ENCODE measurements at regions of chr5 and their contacts with region 1.

Region 1: DNA sequence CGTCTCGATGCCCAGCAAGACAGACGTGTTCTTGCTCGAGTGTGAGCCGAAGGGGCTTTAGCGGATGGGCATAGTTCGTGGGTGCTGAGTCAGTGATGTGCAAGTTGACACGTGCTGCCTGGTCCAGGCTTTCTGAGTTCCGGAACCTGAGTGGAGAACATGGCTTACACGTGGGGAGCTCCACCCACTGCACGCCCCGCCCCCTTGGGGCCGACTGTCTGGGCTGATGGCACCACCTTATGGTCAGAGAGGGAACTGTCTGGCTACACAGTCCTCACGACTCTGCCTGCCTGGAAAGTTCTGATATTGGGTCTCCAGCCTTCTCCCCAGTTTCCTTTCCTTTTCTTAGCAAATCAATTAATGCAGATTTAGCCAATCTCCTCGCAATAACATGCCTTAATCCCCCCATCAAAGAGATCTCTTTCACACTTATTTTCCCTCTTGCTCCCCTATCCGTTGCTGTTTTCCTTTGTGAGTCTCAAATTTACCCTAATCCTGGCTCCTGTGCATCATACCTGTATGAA is 3.8 kb upstream of the STC2 start:
- DNase-seq: peak; percentile 95

Region 2: GRCh38 chr5:172347496-172348052 is 984.4 kb before region 1 on chr5:
- intact Hi-C with region 1: no loop called
- DNase-seq: peak; percentile 44

Region 3: DNA sequence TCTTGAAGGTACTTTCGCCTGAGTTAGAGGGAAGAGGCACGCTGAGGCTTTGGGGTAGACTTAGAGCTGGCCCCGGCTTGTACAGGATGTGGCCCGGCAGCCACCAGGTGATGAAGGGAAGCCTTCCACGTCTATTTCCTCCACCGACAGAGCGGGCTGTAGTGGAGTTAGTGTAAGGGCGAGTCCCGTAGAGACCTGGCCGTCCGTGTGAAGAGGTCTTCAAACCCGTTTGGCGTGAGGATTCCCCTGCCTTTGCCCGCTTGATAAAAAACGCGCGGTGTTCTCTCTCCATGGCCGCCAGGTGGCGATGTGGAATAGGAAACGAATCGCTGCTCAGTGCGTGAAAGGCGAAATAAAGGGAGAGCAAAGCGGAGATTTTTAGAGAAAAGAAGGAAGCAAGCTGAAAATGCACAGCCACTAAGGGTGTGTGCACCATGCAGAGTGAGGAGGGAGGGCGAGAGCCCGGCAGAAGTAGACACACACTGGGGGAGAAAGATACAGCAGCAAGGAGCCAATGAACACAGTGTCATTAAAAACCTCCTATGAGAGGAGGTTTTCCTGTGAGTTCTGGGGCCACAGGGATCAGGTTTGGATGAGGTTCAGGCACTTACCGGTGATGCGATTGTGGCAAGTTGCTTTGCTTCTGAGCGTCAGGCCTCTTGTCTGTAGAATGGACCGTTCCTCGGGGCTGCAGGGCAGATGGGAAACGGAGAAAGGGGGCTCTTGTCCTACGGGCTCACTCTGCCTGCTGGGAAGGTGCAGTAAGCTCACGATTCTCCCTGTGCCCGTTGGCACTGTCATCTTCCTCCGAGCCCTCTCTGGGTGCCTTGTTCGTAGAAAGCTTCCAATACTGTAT is 38.0 kb before region 1 on chr5:
- intact Hi-C with region 1: loop called (anchors 2 kb)
- DNase-seq: peak; percentile 90

Region 4: GRCh38 chr5:173315495-173316350 is 16.3 kb before region 1 on chr5:
- intact Hi-C with region 1: no loop called
- DNase-seq: peak; percentile 80

Region 5: DNA sequence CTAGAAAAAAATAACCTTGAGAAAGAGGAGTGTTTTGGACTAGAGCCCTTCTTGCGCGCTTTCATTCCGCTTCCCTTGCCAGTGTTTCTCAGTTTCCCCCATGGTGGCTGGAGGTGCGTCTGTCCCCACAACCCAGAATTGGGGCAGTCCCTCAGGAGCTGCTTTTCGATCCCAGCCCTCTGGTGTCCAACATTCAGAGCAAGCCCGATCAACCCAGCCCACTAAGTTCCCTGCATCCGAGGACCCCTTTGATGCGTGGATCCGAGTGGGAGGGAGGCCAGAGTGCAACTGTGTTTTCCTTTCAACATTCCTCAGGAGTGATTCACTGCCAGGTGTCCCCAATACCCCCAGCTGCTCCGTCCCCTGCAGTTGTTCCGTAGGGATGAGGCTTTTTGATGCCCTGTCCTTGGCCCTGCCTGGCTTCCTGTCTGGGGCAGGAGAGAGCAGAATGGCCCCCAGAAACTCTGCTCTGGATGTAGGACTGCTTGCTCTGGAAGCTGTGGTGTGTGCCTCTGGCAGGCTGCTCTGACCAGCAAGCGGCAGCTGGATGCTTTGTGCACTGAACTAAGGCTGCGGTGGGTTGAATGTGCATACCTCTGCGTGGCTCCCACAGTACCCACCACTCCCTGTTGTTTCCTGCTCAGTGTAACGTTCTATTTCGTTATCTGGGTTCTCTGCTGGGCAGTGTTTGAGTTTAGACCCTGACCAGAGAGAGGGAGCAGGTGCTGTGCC is 166.9 kb after region 1 on chr5:
- intact Hi-C with region 1: no loop called
- DNase-seq: no peak

Region 6: DNA sequence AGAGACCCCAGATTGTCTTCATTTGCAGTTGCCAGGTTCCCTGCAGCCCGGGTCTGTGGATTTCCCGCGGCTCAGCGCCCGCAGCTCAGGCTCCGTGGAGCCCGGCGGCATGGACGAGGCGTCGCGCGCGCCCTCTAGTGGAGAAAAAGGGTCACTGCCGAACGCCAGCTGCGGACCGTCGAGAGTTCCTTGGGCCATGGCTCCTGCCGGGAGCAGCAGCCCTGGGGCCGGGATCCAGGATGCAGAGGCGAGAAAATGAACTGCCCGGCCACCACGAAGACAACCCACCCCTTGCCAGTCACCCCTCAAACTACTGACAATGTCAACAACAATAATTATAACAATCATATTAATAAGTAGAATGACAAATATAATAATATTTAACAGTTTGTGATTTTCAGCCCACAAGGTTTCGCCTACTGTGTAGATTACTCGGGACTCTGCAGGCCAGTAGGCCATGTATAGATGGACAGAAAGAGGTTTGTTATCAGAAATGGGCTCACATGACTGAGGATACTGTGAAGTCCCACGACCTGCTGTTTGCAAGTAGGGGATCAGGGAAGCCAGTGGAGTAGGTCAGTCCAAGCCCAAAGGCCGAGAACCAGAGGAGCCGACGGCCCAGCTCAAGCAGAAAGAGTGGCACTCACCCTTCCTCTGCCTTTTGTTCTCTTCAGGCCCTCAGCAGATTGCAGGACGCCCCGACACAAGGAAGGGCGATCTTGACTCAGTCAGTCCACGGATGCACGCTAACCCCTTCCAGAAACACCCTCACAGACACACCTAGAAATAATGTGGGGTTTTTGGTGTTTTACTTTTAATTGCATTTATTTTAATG is 241.3 kb after region 1 on chr5:
- intact Hi-C with region 1: loop called in 1 of 2 experiments (anchors 10 kb)
- DNase-seq: peak; percentile 95